ENCODE measurements at regions of chr11 and their contacts with region 1.

Region 1: GRCh38 chr11:3709977-3710376 is 38.8 kb upstream of the CHRNA10 start:
- DNase-seq: peak; percentile 80
- H3K4me3 ChIP-seq: no peak overlapping the region
- CTCF ChIP-seq: no peak

Region 2: DNA sequence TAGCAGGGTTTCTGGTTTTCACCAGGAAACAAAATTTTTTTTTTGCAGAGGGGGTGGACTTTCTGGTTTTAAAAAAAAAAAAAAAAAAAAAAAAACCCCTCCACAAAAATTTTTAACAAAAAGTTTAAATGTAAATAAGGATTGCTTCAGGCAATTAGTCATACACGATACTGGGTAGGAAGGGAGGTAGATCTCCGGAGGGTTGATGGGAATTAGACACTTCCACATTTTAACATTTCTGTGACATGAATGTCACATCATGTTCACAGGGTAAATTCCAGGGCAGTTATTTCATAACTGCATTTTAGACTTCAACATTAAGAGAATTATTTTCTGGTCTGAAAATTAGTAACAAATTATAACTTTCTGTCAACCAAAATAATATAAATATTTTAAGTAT is 71.4 kb after region 1 on chr11:
- in situ Hi-C with region 1: loop called (anchors 5 kb)
- DNase-seq: no peak
- H3K4me3 ChIP-seq: no peak overlapping the region
- CTCF ChIP-seq: no peak